Mammary epithelial cell (primary cell): ENCODE measurements at regions of chr1 and their contacts with region 1.

Region 1: DNA sequence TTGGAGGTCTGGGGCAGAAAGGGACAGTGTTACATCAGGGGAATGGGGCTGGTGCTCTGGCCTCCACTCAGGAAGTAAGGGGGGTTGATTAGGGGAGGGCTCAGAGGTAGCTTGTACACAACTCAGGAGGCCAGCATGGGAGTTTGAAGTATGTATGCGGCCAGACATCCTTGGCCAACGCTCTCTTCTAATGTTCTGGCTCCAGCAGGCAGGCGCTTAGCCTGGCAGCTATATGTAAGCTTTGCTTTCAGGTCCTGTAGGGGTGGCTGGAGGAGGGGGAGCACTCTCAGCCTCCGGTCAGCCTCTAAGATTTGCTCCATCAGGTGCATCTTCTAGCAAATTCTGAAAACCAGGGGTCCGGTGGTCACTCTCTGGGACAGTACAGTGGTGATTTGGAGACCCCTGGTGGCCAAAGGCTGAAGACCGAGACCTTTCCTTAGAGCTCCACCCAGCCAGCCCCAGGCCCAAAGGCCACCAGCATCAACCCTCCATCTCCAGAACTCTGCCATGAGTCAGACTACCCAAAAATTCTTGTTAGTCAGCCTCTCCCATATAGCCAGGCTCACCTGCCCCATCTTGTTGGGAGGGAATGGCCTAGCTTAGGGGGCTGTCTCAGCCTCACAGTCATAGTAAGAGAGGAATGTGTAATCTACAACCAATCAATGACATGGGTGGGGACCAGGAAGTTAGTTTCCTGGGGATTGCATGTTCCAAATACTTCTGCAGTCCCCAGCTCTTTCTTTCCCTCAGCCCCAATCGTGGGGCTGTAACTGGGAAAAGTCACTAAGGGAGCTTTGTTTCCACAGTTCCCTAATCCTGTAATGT is 9.7 kb upstream of the COL8A2 start:
- DNase-seq: peak; percentile 91
- H3K4me3 ChIP-seq: no peak overlapping the region
- H3K27ac ChIP-seq: peak overlapping the region; percentile 79
- H3K4me1 ChIP-seq: peaks cover 41% of the 10 kb centered on the region
- H3K27me3 ChIP-seq: no peaks in the 10 kb centered on the region
- CTCF ChIP-seq: peak; percentile 62 to 64

Region 2: DNA sequence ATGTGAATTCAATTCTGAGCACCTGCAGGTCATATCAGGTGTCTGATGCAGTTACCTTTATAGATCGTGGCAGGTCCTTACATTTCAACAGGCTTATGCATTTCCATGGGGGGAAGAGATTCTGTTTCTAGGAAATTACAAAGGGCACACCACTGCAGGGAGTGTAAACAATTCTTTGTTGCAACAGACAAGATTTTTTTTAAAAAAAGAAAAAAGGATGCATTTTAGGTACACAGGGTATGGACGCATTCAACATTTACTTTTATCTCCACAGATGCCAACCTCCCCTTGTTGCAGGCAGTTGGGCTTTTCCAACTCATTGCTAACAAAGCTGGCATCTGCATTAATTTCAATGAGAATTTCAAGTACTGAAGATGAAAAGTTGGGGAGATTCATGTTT is 64.4 kb before region 1 on chr1:
- CTCF ChIA-PET with region 1: no interaction called
- dilution Hi-C with region 1: no loop called
- in situ Hi-C with region 1: no loop called
- intact Hi-C with region 1: no loop called
- DNase-seq: no peak
- H3K4me3 ChIP-seq: no peak overlapping the region
- H3K27ac ChIP-seq: no peak overlapping the region
- H3K4me1 ChIP-seq: no peaks in the 10 kb centered on the region
- H3K27me3 ChIP-seq: no peaks in the 10 kb centered on the region
- CTCF ChIP-seq: no peak

Region 3: DNA sequence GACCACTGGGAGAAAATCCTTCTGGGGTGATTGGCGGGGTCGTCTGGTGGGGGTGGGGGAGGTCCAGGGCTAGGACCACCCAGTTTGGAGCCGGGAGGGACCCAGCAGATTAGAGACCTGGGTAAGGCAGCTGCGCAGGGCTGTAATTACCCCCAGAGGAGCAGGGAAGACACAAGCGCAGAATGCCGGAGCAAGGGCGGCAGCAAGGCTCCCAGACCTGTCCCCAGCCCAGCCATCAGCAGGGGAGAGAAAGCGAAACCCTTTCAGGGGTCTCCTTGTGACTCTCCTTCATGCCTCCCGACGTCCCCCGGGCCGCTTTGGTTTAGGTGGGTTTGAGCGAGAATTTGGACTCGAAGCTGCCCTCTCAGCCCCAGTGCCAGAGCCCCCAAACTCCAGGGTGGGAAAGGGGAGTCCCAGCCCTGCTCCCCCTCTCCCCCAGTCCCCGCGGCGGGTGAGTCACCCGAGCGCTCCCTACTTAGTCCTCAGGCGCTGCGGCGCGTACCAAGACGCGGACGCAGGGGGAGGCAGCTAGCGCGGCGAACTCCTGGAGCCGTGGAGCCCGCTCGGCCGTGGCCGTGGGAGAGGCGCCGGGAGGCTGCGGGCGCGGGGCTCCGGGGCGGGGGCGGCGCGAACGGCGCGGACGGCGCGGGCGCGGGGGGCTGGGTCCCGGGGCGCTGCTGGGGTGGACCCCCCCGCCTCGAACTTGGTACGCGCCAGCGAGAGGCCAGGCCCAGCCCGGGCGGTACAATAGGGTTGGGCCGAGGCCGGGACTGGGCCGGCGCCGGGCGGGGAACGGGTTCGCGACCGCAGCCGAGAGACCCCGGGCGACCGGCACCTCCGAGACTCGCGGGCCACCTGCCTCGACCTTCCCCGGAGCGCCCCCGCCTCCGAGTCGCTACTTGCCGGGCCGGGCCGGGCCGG is 21.0 kb after region 1 on chr1 and contains the start of gene MAP7D1:
- CTCF ChIA-PET with region 1: interaction called, 11 read pairs
- dilution Hi-C with region 1: no loop called
- in situ Hi-C with region 1: no loop called
- intact Hi-C with region 1: no loop called
- DNase-seq: peak; percentile 76
- H3K4me3 ChIP-seq: peak within 1 kb of the TSS; percentile 59 to 95 (median 84)
- H3K27ac ChIP-seq: peak within 1 kb of the TSS; percentile 84
- H3K4me1 ChIP-seq: peaks cover 48% of the 10 kb centered on the region
- H3K27me3 ChIP-seq: no peaks in the 10 kb centered on the region
- CTCF ChIP-seq: no peak
- total RNA-seq, gene MAP7D1: 99.4 to 331 TPM

Region 4: GRCh38 chr1:36664571-36665287 is 530.0 kb after region 1 on chr1:
- CTCF ChIA-PET with region 1: no interaction called
- dilution Hi-C with region 1: no loop called
- in situ Hi-C with region 1: no loop called
- intact Hi-C with region 1: no loop called
- DNase-seq: no peak
- H3K4me3 ChIP-seq: no peak overlapping the region
- H3K27ac ChIP-seq: no peak overlapping the region
- H3K4me1 ChIP-seq: no peaks in the 10 kb centered on the region
- H3K27me3 ChIP-seq: peaks cover 5% of the 10 kb centered on the region
- CTCF ChIP-seq: no peak